ENCODE measurements at regions of chr12 and their contacts with region 1.

Region 1: DNA sequence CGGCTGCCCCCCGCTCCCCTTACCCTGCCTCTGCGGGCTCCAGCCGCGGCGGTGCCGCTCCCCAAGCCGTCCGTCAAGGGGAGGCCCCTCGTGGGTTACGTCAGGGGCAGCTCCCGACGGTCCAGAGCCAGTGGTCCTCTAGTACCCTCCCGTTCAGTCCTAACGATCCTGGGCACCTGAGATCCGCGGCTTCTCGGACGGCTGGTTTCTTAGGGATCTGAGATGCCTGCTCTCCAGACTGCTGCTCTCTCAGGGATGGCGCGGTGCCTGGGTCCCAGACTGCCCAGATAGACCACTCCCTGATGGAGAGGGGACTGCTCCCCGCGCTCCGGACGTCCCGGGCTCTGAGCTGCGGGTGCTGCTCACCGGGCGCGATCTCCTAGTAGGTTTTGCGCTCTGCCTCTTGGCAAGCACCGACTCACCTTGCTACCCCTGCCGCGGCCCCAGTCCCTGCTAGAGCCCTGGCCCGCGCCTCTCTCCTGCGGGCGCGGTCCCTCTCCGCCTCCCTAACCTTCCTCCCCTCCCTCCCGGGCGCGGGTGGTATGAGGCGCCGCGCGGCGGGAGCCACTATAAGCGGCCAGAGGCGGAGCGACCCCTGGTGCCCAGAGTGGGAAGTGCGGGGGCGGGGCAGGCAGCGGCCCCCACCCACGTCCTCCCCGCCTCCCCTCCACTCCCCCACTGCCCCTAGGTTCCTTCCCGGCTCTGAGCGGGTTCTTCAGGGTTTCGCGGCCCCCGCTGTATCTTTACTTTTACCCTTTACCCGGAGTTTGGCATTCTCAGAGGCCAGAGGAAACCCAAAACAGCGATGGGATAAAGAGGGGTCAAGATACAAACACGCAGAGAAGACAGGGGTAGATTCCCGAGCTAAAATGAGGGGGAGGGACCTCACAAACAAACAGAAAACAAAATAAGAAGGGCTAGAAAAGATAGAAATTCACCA is at the start of gene C1QL4:
- DNase-seq: peak; percentile 87
- ATAC-seq: peak; percentile 92
- H3K4me3 Mint-ChIP-seq: peak within 1 kb of the TSS; percentile 40
- H3K27ac Mint-ChIP-seq: no peak within 1 kb of the TSS
- H3K4me1 Mint-ChIP-seq: peaks cover 17% of the 10 kb centered on the region
- H3K27me3 Mint-ChIP-seq: peaks cover 80% of the 10 kb centered on the region
- total RNA-seq, gene C1QL4: not detected

Region 2: DNA sequence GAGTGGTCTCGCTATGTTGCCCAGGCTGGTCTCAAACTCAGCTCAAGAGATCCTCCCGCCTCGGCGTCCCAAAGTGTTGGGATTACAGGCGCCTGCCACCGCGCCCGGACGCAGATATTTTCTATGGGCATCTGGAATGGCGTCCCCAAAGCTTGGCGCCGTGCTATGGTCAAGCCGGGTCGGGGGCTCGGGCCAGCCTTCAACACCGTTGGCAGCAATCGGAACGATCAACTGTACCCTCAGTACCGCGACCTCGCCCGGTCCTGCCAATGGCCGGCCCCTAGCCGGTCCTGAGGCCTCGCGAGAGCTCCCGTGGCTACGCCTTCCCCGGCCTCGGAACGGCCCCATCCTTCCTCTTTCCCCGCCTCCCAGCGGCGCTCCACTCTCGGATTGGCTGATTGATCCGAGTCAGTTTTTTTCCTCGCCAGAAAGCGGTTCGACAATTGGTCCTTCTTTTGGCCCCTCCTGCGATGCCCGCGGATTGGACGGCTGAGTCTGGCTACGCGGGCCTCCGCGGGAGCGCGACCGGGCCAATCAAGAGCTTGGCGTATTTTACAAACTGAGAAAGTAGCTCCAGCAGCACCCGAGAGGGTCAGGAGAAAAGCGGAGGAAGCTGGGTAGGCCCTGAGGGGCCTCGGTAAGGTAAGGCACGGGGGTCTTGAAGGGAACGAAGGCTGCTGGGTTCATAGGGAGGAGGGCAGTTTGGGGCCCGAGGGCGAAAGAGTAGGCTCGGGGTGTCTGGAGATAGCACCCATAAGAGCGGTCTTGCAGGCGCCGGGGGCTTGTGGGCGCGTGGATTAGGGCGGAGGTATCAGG is 14.0 kb before region 1 on chr12 and contains the start of gene TROAP:
- CTCF ChIA-PET with region 1: interaction called, 45 read pairs
- DNase-seq: peak; percentile 99
- ATAC-seq: peak; percentile 98
- H3K4me3 Mint-ChIP-seq: peak within 1 kb of the TSS; percentile 97
- H3K27ac Mint-ChIP-seq: peak within 1 kb of the TSS; percentile 98
- H3K4me1 Mint-ChIP-seq: peaks cover 28% of the 10 kb centered on the region
- H3K27me3 Mint-ChIP-seq: no peaks in the 10 kb centered on the region
- total RNA-seq, gene TROAP: 89.5 to 107 TPM

Region 3: DNA sequence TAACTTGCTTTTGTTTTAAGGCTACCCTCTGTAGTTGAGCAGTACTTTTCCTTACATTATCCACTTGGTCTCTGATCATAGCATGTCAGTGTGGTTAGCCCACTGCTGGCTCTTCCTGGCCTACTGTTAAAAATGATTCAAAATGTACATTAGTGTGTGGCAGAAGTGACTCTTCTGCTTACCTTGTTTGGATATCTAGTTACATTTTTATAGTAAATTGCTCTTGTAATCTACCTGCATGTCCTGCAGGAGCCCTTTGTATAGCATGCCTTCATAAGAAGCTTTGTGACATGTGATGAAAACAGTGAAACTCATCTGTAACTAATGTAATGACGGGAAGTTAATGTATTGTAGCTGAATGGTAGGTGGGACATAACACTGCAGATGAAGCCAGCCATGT is 38.5 kb after region 1 on chr12:
- CTCF ChIA-PET with region 1: no interaction called
- DNase-seq: no peak
- ATAC-seq: peak; percentile 81
- H3K4me3 Mint-ChIP-seq: no peak overlapping the region
- H3K27ac Mint-ChIP-seq: peak overlapping the region; percentile 16
- H3K4me1 Mint-ChIP-seq: peaks cover 20% of the 10 kb centered on the region
- H3K27me3 Mint-ChIP-seq: no peaks in the 10 kb centered on the region

Measured in activated CD8-positive, alpha-beta memory T cell treated with anti-CD3 and anti-CD28 coated beads, Interleukin-2, amount 10 ng/mL, durations not matched to agents 7 days and 5 days (primary cell).